GM12878 (cell line): ENCODE measurements at regions of chr1 and their contacts with region 1.

Region 1: GRCh38 chr1:167220537-167221125 is at the start of gene POU2F1:
- DNase-seq: peak; percentile 94
- ATAC-seq: peak; percentile 81
- H3K4me3 ChIP-seq: peak within 1 kb of the TSS; percentile 92
- H3K27ac ChIP-seq: peak within 1 kb of the TSS; percentile 98
- H3K4me1 ChIP-seq: peaks cover 10% of the 10 kb centered on the region; the same call in 1 of the 2 replicates
- H3K27me3 ChIP-seq: no peaks in the 10 kb centered on the region
- CTCF ChIP-seq: peak; percentile 64 to 81 (median 78)
- EP300 ChIP-seq: no peak
- POLR2A ChIP-seq: no peak; the same call in 1 of the 2 replicates
- RAD21 ChIP-seq: peak; percentile 63
- polyA plus RNA-seq, gene POU2F1: 2.5 to 4.6 TPM

Region 2: GRCh38 chr1:166682588-166682987 is 538.0 kb before region 1 on chr1:
- CTCF ChIA-PET with region 1: no interaction called
- POLR2A ChIA-PET with region 1: no interaction called
- RAD21 ChIA-PET with region 1: no interaction called
- SMC1A ChIA-PET with region 1: no interaction called
- in situ Hi-C with region 1: no loop called
- intact Hi-C with region 1: no loop called
- DNase-seq: no peak
- ATAC-seq: no peak
- H3K4me3 ChIP-seq: no peak overlapping the region
- H3K27ac ChIP-seq: no peak overlapping the region
- H3K4me1 ChIP-seq: no peaks in the 10 kb centered on the region
- H3K27me3 ChIP-seq: no peaks in the 10 kb centered on the region
- CTCF ChIP-seq: no peak
- EP300 ChIP-seq: no peak
- POLR2A ChIP-seq: no peak
- RAD21 ChIP-seq: no peak

Region 3: GRCh38 chr1:166875734-166876539 is 344.7 kb before region 1 on chr1 and contains the start of gene TADA1:
- CTCF ChIA-PET with region 1: interaction called, 3 read pairs
- POLR2A ChIA-PET with region 1: no interaction called
- RAD21 ChIA-PET with region 1: interaction called, 10 read pairs
- SMC1A ChIA-PET with region 1: no interaction called
- in situ Hi-C with region 1: no loop called
- intact Hi-C with region 1: no loop called
- DNase-seq: peak; percentile 90
- ATAC-seq: peak; percentile 90
- H3K4me3 ChIP-seq: peak within 1 kb of the TSS; percentile 76
- H3K27ac ChIP-seq: peak within 1 kb of the TSS; percentile 95
- H3K4me1 ChIP-seq: peaks cover 5% of the 10 kb centered on the region; the same call in 1 of the 2 replicates
- H3K27me3 ChIP-seq: no peaks in the 10 kb centered on the region
- CTCF ChIP-seq: peak in 1 of 3 experiments; percentile 36; a peak in 3 of 6 replicates
- EP300 ChIP-seq: peak; percentile 22 to 52; a peak in 1 of 4 replicates
- POLR2A ChIP-seq: peak; percentile 86
- RAD21 ChIP-seq: peak; percentile 10; the same call in 1 of the 2 replicates
- polyA plus RNA-seq, gene TADA1: 31.5 to 38.6 TPM

Region 4: DNA sequence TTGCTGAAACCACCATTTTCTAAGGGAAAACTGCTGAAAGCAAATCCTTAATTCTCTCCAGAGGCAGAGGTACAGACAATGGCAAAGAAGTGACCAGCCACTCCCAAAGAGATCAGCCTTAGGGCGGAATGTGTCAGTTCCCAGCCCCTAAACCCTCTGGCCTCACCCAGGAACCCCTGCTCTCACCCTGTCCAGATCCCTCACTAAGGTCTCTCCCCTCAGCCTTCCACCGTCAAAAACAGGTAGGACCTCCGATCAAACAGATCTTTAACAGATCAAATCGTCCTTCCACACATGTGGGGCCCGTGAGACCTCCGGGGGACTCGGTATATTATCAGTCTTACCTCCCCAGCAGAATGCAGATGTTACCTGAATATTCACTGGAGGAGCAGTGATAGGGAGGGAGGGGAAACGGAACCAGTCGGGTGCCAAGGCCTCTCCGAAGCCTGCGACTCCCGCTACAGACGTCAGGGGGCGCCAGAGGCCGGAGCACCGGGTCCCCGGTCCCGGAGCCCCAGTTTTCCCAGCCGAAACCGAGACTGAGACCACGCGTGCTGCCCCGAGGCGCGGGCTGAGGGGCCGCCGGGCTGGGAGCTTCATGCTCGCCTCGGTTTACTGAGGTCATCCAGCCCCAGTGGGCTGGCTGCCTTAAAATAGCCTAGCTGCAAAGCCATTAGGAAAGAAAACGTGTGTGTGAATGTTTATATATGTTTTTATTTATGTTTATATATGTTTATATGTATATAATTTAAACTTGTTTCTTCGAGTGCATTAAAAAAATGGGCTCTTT is 154.1 kb before region 1 on chr1:
- CTCF ChIA-PET with region 1: interaction called, 14 read pairs
- POLR2A ChIA-PET with region 1: interaction called, 4 read pairs
- RAD21 ChIA-PET with region 1: interaction called, 11 read pairs
- SMC1A ChIA-PET with region 1: interaction called, 7 read pairs
- in situ Hi-C with region 1: no loop called
- intact Hi-C with region 1: loop called (anchors 1 kb)
- DNase-seq: no peak
- ATAC-seq: peak; percentile 97
- H3K4me3 ChIP-seq: peak overlapping the region; percentile 70; the same call in 1 of the 2 replicates
- H3K27ac ChIP-seq: no peak overlapping the region
- H3K4me1 ChIP-seq: no peaks in the 10 kb centered on the region
- H3K27me3 ChIP-seq: no peaks in the 10 kb centered on the region; a peak in 1 of 4 replicates
- CTCF ChIP-seq: peak; percentile 92 to 98 (median 97); a peak in 5 of 6 replicates
- EP300 ChIP-seq: no peak
- POLR2A ChIP-seq: no peak
- RAD21 ChIP-seq: peak; percentile 87

Region 5: DNA sequence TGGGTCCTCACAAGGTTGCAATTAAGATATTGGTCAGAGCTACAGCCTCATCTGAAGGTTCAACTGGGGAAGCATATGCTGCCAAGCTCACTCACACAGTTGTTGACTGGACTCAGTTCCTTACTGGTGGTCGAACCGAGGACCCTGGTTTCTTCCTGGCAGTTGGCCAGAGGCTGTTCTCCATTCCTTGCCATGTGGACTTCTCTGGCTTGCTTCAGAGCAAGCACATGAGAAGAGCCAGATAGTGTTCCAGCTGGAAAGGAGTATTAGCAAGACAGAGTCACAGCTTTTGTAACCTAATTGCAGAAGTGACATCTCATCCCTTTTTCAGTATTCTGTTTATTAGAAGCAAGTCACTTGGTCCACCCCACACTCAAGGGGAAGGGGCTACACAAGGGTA is 23.6 kb after region 1 on chr1:
- CTCF ChIA-PET with region 1: interaction called, 21 read pairs
- POLR2A ChIA-PET with region 1: interaction called, 10 read pairs
- RAD21 ChIA-PET with region 1: interaction called, 16 read pairs
- SMC1A ChIA-PET with region 1: interaction called, 15 read pairs
- in situ Hi-C with region 1: no loop called
- intact Hi-C with region 1: no loop called
- DNase-seq: no peak
- ATAC-seq: no peak
- H3K4me3 ChIP-seq: no peak overlapping the region
- H3K27ac ChIP-seq: no peak overlapping the region
- H3K4me1 ChIP-seq: peaks cover 12% of the 10 kb centered on the region
- H3K27me3 ChIP-seq: no peaks in the 10 kb centered on the region
- CTCF ChIP-seq: no peak
- EP300 ChIP-seq: no peak
- POLR2A ChIP-seq: no peak
- RAD21 ChIP-seq: no peak

Region 6: GRCh38 chr1:167342846-167343245 is 122.2 kb after region 1 on chr1:
- CTCF ChIA-PET with region 1: interaction called, 13 read pairs
- POLR2A ChIA-PET with region 1: interaction called, 3 read pairs
- RAD21 ChIA-PET with region 1: interaction called, 20 read pairs
- SMC1A ChIA-PET with region 1: interaction called, 6 read pairs
- in situ Hi-C with region 1: no loop called
- intact Hi-C with region 1: no loop called
- DNase-seq: no peak
- ATAC-seq: peak; percentile 93
- H3K4me3 ChIP-seq: no peak overlapping the region
- H3K27ac ChIP-seq: no peak overlapping the region
- H3K4me1 ChIP-seq: no peaks in the 10 kb centered on the region
- H3K27me3 ChIP-seq: no peaks in the 10 kb centered on the region
- CTCF ChIP-seq: peak; percentile 39 to 59 (median 45); a peak in 5 of 6 replicates
- EP300 ChIP-seq: no peak
- POLR2A ChIP-seq: no peak
- RAD21 ChIP-seq: peak; percentile 68

Region 7: DNA sequence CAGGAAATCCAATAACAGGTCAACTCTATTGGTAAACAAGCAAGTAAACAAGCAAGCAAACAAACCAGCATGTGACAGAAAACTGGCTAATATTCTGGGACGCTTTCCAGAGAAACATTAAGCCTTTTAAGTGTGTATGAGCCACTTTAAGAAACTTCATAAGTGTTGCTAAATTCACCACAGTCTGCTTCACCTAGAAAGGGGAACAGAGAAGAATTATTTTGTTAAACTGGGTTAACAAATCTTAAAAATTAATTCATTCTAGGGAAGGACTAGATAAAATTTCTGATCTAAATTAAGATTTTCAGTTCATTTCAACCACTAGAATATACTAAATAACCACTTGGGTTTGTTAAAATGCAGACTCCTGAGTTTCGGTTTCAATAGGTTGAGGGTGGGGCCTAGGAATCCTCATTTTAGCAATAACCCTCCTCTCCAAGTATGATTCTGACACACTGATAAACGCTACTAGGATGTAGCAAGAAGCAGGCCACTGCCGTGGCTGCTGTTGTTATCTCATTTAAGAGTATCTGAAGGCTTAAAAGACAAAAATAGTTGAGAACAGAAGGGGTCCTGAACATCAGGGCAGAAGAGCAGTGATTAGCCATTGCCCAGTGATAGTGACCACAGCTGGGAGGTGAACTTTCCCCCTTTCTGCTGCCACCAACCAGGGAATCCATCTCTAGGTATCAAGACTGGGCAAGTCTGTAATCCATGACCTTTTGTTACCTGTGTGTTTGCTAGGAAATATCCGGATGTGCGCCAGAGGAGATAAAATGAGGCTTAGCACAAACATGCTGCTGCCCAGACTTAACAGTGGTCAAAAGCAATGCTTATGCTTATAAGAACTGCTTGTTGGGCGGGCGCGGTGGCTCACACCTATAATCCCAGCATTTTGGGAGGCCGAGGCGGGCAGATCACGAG is 321.7 kb after region 1 on chr1:
- CTCF ChIA-PET with region 1: interaction called, 6 read pairs
- POLR2A ChIA-PET with region 1: interaction called, 3 read pairs
- RAD21 ChIA-PET with region 1: interaction called, 12 read pairs
- SMC1A ChIA-PET with region 1: interaction called, 3 read pairs
- in situ Hi-C with region 1: no loop called
- intact Hi-C with region 1: loop called (anchors 5 kb)
- DNase-seq: no peak
- ATAC-seq: peak; percentile 32
- H3K4me3 ChIP-seq: peak overlapping the region; percentile 23; the same call in 1 of the 2 replicates
- H3K27ac ChIP-seq: peak overlapping the region; percentile 45; the same call in 1 of the 2 replicates
- H3K4me1 ChIP-seq: peaks cover 59% of the 10 kb centered on the region
- H3K27me3 ChIP-seq: no peaks in the 10 kb centered on the region
- CTCF ChIP-seq: no peak
- EP300 ChIP-seq: no peak
- POLR2A ChIP-seq: no peak
- RAD21 ChIP-seq: no peak